ENCODE measurements at regions of chr17 and their contacts with region 1.

Region 1: DNA sequence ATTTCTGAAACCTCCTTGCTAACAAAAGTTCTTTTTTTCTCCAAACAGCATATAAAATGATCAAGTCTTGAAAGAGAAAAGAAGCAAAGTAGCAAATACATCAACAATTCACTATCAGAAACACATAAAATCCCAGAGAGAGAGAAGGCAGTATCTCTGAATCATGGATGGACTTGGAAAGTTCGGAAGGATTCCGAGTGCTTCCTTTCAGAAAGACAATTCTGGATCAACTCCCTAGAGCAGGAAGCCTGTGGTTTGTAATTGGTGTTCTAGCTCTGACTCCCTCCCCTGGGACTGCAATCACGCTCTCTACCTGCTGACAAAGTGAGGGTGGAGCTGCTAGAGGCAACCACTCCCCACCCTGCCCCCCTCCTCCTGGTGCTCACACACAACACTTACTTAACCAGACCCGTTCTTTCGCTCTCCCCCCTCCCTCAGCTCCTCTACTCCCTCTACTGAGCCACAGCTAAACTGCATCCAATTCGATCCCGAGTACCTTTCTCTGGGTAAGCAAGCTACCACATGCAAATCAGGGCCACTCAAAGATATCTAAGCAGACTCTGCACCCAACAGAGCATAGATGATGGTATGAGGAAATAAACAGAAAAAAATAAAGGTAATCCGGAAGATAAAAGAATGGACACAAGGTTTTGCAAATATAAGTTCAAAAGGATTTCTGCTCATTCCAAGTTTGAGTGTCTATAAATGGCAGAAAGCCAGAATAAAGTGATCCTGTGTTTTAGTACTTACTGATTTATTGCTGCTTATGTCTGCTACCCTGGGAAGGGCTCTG is at the start of gene RNF43:
- DNase-seq: peak; percentile 96 to 99 (median 99)
- H3K4me3 ChIP-seq: peak within 1 kb of the TSS in 2 of 4 donors; percentile 22 to 56
- H3K27ac ChIP-seq: peak within 1 kb of the TSS in 4 of 5 donors; percentile 76 to 88 (median 83)
- H3K4me1 ChIP-seq: peaks cover 9 to 10% of the 10 kb centered on the region in 2 donors
- H3K27me3 ChIP-seq: no peaks in the 10 kb centered on the region
- CTCF ChIP-seq: peak; percentile 57 to 98 (median 90)
- POLR2A ChIP-seq: peak; percentile 73 to 99
- total RNA-seq, gene RNF43: 10.5 to 30.8 (median 17.8) TPM

Region 2: GRCh38 chr17:58329035-58329809 is 88.3 kb before region 1 on chr17:
- intact Hi-C with region 1: loop called in 1 of 2 experiments (anchors 10 kb)
- DNase-seq: peak in 3 of 7 donors; percentile 44 to 62 (median 51)
- H3K4me3 ChIP-seq: no peak overlapping the region
- H3K27ac ChIP-seq: no peak overlapping the region
- H3K4me1 ChIP-seq: peaks cover 7% of the 10 kb centered on the region in 2 donors
- H3K27me3 ChIP-seq: no peaks in the 10 kb centered on the region
- CTCF ChIP-seq: peak in 1 of 6 experiments; percentile 19
- POLR2A ChIP-seq: no peak

Measured in adrenal gland (tissue), 19 donors.